Dendritic cell treated with granulocyte-macrophage colony-stimulating factor and Interleukin-4, amounts not matched to agents 40 ng/mL and 50 ng/mL, for 4 days (primary cell): ENCODE measurements at regions of chr11 and their contacts with region 1.

Region 1: GRCh38 chr11:6258571-6259081 is 1.0 kb upstream of the CCKBR start:
- H3K4me3 Mint-ChIP-seq: peak overlapping the region; percentile 2
- H3K27ac Mint-ChIP-seq: no peak overlapping the region
- H3K4me1 Mint-ChIP-seq: peaks cover 8% of the 10 kb centered on the region
- H3K27me3 Mint-ChIP-seq: no peaks in the 10 kb centered on the region

Region 2: GRCh38 chr11:6156628-6157359 is 101.8 kb before region 1 on chr11:
- intact Hi-C with region 1: no loop called
- H3K4me3 Mint-ChIP-seq: no peak overlapping the region
- H3K27ac Mint-ChIP-seq: no peak overlapping the region
- H3K4me1 Mint-ChIP-seq: peaks cover 6% of the 10 kb centered on the region
- H3K27me3 Mint-ChIP-seq: peaks cover 2% of the 10 kb centered on the region

Region 3: GRCh38 chr11:6219359-6219758 is 39.3 kb before region 1 on chr11:
- intact Hi-C with region 1: no loop called
- H3K4me3 Mint-ChIP-seq: no peak overlapping the region
- H3K27ac Mint-ChIP-seq: no peak overlapping the region
- H3K4me1 Mint-ChIP-seq: peaks cover 33% of the 10 kb centered on the region
- H3K27me3 Mint-ChIP-seq: no peaks in the 10 kb centered on the region

Region 4: GRCh38 chr11:6269994-6270393 is 11.4 kb after region 1 on chr11:
- intact Hi-C with region 1: loop called (anchors 1 kb)
- H3K4me3 Mint-ChIP-seq: no peak overlapping the region
- H3K27ac Mint-ChIP-seq: no peak overlapping the region
- H3K4me1 Mint-ChIP-seq: peaks cover 16% of the 10 kb centered on the region
- H3K27me3 Mint-ChIP-seq: peaks cover 55% of the 10 kb centered on the region